AG04450 (cell line): ENCODE measurements at regions of chr2 and their contacts with region 1.

Region 1: GRCh38 chr2:231399853-231400680 is 4.6 kb downstream of the B3GNT7 start:
- DNase-seq: no peak
- H3K4me3 ChIP-seq: no peak overlapping the region
- H3K27ac ChIP-seq: no peak overlapping the region
- H3K27me3 ChIP-seq: peaks cover 19% of the 10 kb centered on the region
- CTCF ChIP-seq: no peak

Region 2: GRCh38 chr2:231181860-231182512 is 218.1 kb before region 1 on chr2:
- CTCF ChIA-PET with region 1: no interaction called
- POLR2A ChIA-PET with region 1: no interaction called
- DNase-seq: no peak
- H3K4me3 ChIP-seq: no peak overlapping the region
- H3K27ac ChIP-seq: no peak overlapping the region
- H3K27me3 ChIP-seq: no peaks in the 10 kb centered on the region
- CTCF ChIP-seq: no peak

Region 3: GRCh38 chr2:231411831-231412617 is 12.0 kb after region 1 on chr2:
- CTCF ChIA-PET with region 1: interaction called, 19 read pairs
- POLR2A ChIA-PET with region 1: no interaction called
- DNase-seq: peak; percentile 50
- H3K4me3 ChIP-seq: peak overlapping the region; percentile 73
- H3K27ac ChIP-seq: no peak overlapping the region
- H3K27me3 ChIP-seq: no peaks in the 10 kb centered on the region
- CTCF ChIP-seq: peak; percentile 92

Region 4: DNA sequence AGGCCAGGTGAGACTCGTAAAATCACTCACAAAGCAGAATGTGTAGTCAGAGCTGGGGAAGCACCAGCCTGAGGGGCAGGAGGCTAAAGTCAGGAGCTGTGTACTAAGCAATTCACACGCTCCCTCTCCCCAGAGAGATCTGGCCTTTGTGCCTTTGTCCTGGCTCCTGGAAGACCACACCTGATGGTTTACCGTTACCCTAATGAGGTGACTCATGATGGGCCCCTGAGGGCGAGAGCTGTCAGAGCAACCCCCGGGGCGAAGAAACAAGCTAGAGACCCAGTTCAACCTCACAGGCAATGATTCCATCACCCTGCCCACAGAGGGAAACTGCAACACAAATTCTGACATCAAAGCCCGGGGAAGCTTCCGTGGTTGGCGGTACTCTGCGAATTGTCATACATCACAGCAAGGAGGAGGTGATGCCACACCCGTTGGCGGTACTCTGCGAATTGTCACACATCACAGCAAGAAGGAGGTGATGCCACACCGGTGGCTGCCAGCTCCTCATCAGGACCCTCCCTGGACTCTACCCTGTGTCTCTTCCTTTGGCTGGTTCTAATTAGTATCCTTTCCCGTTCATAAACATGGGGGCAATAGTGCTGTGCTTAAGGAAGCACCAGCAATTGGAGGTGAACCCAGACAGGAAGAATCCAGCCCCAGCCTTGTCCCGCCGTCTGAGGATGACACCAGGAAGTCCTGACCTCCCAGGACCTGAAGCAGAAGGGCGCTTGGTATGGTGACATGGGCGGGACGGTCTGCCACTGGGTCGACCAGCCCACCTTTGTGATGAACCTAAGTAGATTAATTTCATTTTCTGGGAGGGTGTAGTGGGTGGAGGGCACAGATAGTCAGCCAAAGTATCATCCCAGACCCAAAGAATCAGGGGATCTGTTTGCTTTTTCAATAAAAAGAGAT is 26.0 kb after region 1 on chr2:
- CTCF ChIA-PET with region 1: no interaction called
- POLR2A ChIA-PET with region 1: no interaction called
- DNase-seq: no peak
- H3K4me3 ChIP-seq: no peak overlapping the region
- H3K27ac ChIP-seq: no peak overlapping the region
- H3K27me3 ChIP-seq: peaks cover 9% of the 10 kb centered on the region
- CTCF ChIP-seq: no peak

Region 5: DNA sequence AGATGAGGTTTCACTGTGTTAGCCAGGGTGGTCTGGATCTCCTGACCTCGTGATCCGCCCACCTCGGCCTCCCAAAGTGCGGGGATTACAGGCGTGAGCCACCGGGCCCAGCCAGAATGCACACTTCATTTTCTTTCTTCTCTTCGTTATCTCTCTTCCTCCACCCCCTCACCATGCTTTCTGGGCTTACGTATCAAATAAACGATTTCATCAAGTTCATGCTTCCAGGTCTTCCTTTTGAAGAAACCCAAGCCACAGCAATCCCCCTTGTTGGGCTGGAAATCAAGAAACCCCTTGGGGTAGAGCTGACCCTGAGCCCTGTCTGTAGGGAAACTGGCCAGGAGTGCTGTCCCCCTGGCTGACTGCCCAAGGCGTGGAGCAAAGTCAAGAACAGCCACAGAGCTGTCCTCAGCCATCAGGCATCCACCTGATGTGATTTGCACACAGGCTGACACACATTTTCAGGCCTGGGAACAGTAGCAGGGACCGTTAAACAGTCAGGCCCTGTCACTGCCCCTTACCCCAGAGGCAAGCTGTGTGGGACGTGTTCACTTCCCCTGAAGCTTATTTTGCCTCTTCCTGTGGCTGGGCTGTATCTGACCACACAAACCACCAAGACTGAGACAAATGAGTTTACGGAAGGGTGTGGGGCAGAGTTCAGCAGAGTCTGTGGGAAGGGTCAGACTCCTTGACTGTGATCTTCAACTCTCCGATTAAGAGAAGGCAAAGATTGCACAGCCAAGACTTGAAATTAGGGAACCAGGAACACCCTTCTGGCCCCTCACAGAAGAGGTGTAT is 145.2 kb after region 1 on chr2:
- CTCF ChIA-PET with region 1: no interaction called
- POLR2A ChIA-PET with region 1: no interaction called
- DNase-seq: no peak
- H3K4me3 ChIP-seq: no peak overlapping the region
- H3K27ac ChIP-seq: no peak overlapping the region
- H3K27me3 ChIP-seq: peaks cover 12% of the 10 kb centered on the region
- CTCF ChIP-seq: no peak